ENCODE measurements at regions of chr10 and their contacts with region 1.

Region 1: GRCh38 chr10:117216611-117217195 is 19.4 kb downstream of the KCNK18 start:
- DNase-seq: peak; percentile 59
- H3K4me3 ChIP-seq: peak overlapping the region; percentile 51 to 68 (median 56)
- H3K27ac ChIP-seq: no peak overlapping the region
- H3K4me1 ChIP-seq: peaks cover 18% of the 10 kb centered on the region
- H3K27me3 ChIP-seq: no peaks in the 10 kb centered on the region
- CTCF ChIP-seq: peak; percentile 85 to 100

Region 2: GRCh38 chr10:117137031-117137910 is 79.4 kb before region 1 on chr10:
- CTCF ChIA-PET with region 1: no interaction called
- dilution Hi-C with region 1: no loop called
- in situ Hi-C with region 1: no loop called
- intact Hi-C with region 1: no loop called
- DNase-seq: peak; percentile 45
- H3K4me3 ChIP-seq: peak overlapping the region; percentile 29 to 33 (median 33)
- H3K27ac ChIP-seq: no peak overlapping the region
- H3K4me1 ChIP-seq: peaks cover 13% of the 10 kb centered on the region
- H3K27me3 ChIP-seq: peaks cover 72% of the 10 kb centered on the region
- CTCF ChIP-seq: no peak

Region 3: DNA sequence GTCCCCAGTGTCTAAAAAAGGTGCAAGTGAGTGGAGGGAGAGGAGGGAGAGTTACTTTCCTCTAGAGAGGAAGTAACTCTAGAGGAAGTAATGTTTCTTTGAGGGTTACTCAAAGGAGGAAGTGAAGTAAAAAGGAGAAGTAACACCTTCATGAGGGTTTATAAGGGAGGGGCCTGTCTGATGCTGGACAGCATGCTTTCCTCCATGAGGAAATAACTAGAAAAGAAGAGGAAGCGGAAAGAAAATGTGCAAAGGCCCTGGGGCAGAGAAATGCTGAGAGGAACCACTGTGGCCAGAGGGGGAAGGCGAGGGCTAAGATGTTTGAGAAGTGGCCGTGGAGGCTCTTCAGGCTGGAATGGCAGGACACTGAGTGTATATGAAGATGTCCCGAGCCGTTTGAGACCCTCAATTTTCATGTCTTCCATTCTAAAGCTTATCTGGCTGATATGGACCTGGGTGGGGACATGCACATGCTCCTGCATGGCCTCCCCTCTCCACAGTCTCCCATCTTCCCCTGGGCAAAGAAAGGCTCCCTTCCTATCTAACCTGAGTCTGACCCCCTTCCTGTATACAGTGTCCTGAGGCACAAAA is 20.8 kb after region 1 on chr10:
- CTCF ChIA-PET with region 1: interaction called, 10 read pairs
- dilution Hi-C with region 1: no loop called
- in situ Hi-C with region 1: no loop called
- intact Hi-C with region 1: no loop called
- DNase-seq: no peak
- H3K4me3 ChIP-seq: no peak overlapping the region
- H3K27ac ChIP-seq: no peak overlapping the region
- H3K4me1 ChIP-seq: no peaks in the 10 kb centered on the region
- H3K27me3 ChIP-seq: peaks cover 17% of the 10 kb centered on the region
- CTCF ChIP-seq: no peak

Region 4: DNA sequence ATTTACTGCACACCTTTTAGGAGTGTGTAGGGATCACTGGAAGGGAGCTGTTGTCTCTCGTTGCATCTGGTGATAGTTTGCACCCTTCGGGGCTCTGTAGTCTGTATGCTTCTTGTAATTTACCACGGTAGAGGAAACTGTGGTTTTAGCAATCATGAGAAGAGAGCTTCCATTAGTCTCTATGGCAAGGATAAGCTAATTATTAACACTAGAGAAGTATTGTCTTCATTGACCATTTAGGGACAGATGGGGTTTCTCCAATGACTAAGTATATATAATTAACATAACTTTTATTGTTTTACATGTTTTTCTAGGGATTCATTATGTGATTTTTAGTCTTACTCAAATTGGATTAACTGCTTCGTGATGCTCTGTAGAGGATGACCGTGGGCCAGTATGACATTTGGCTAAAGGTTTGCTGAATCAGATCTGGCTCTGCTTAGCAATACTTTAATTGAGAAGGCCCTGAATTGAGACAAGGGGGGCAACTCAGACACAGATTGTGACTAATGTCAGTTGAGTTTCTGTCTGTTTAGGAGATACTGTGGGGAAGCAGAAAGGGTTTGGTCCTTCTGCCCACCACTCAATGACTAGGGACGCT is 32.9 kb after region 1 on chr10:
- CTCF ChIA-PET with region 1: no interaction called
- dilution Hi-C with region 1: no loop called
- in situ Hi-C with region 1: no loop called
- intact Hi-C with region 1: no loop called
- DNase-seq: no peak
- H3K4me3 ChIP-seq: no peak overlapping the region
- H3K27ac ChIP-seq: no peak overlapping the region
- H3K4me1 ChIP-seq: no peaks in the 10 kb centered on the region
- H3K27me3 ChIP-seq: peaks cover 6% of the 10 kb centered on the region
- CTCF ChIP-seq: no peak

Region 5: DNA sequence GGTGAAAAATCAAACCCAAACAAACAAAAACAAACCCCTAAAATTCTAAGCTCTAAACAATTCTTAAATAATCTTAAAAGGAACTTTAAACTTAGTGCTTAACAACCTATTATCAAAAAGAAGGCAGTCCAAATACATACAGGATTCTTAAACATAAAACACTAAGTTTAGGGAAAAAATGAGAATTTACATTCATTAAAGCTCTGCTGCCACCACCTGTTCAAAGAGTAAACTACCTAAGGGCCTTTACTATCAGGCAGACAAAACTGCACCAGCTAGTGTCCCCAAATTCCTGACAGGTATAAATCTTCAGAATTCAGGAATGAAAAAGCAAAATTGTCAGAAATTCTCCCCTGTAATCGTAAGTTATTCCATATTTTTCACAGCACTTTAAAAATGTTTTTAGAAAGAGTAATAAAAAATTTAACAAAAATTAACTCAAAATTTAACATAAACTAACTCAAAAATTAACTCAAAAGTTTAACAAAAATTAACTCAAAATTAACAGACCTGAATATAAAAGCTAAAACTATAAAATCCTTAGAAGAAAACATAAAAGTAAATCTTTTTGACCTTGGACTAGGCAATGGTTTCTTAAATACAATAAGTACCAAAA is 103.5 kb after region 1 on chr10:
- CTCF ChIA-PET with region 1: interaction called, 18 read pairs
- dilution Hi-C with region 1: no loop called
- in situ Hi-C with region 1: loop called (anchors 5 to 10 kb)
- intact Hi-C with region 1: loop called (anchors 1 kb)
- DNase-seq: no peak
- H3K4me3 ChIP-seq: no peak overlapping the region
- H3K27ac ChIP-seq: no peak overlapping the region
- H3K4me1 ChIP-seq: no peaks in the 10 kb centered on the region
- H3K27me3 ChIP-seq: no peaks in the 10 kb centered on the region
- CTCF ChIP-seq: peak; percentile 67 to 70

Region 6: DNA sequence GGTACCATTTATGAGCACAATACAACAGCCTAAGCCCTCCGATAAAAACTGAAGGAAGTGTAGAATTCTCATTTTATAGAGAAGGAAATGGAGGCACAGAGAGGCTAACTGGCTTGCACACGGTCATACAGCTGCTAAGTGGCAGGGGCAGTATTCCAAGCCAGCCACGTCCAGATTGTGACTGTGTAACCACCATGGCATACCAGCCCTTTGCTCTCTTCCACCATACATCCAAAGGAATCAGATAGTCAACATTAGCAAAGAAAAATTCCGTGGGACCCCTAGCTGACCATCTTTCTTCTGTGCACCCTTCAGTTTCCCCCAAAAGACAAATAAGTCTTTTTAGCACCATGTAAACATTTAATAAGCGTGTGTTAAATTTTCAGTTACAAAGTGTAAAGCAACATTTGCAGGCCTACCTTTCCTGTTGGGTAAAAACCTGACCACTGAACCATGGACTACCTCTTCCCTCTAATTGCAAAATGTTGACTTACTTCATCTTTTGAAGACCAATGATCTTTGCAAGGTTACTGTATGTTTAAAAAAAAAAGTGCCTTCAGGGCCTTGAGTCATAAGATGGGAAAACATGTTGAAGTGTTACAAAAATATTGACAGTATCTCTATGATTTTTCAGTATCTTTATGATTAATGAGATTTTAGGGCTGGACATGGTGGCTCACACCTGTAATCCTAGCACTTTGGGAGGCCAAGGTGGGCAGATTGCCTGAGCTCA is 182.8 kb after region 1 on chr10:
- CTCF ChIA-PET with region 1: no interaction called
- dilution Hi-C with region 1: no loop called
- in situ Hi-C with region 1: no loop called
- intact Hi-C with region 1: no loop called
- DNase-seq: peak; percentile 70
- H3K4me3 ChIP-seq: no peak overlapping the region
- H3K27ac ChIP-seq: no peak overlapping the region
- H3K4me1 ChIP-seq: no peaks in the 10 kb centered on the region
- H3K27me3 ChIP-seq: no peaks in the 10 kb centered on the region
- CTCF ChIP-seq: no peak